Transverse colon (tissue), 4 donors: ENCODE measurements at regions of chrX and their contacts with region 1.

Region 1: GRCh38 chrX:69203591-69203990 is 38.3 kb upstream of the PJA1 start:
- DNase-seq: no peak
- H3K4me3 ChIP-seq: no peak overlapping the region
- H3K27ac ChIP-seq: no peak overlapping the region
- H3K4me1 ChIP-seq: no peaks in the 10 kb centered on the region
- H3K27me3 ChIP-seq: no peaks in the 10 kb centered on the region
- CTCF ChIP-seq: no peak
- EP300 ChIP-seq: no peak
- POLR2A ChIP-seq: no peak

Region 2: DNA sequence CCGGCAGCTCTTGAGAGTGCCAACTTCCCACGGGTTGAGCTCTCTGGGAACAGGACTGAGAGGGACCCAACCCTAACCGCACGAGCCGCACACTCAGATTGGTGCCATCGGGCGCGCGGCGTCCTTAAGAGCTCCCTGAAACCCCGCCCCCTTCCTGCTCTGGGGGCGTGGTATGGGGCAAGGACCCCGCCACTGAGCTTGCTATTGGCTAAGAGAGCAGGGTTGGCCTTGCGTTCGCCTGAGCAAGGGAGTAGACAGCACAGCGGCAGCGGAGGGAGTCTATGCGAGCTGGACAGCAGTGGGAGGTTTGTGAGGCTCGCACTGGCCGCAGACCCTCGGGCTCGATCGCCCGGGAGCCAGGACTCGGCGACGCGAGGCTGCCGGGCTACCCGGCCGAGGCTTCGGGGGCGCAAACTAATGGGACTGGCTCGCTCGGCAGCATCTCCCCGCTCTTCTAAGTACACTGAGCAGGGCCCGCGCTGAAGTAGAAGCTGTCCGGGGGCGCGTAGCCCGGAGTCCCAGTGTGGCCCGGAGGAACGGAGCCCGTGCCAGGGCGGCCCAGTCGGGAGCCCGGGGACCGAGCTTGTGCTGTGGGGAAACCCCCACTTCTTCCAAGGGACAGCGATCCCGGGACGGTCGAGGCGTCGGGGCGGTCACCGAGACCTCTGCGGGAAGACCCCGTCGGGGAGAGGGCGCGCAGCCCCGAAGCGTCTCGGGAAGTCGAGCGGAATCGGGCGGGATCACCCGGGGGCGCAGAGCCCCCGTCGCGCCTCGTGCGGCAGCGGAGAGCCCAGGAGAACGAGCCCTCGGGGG is 374.6 kb before region 1 on chrX and contains the start of gene EFNB1:
- in situ Hi-C with region 1: no loop called
- intact Hi-C with region 1: no loop called
- DNase-seq: peak; percentile 93
- H3K4me3 ChIP-seq: peak within 1 kb of the TSS; percentile 58 to 90 (median 72)
- H3K27ac ChIP-seq: peak within 1 kb of the TSS; percentile 84 to 94 (median 87)
- H3K4me1 ChIP-seq: peaks cover 0 to 22% (median 11%) of the 10 kb centered on the region in 4 donors
- H3K27me3 ChIP-seq: no peaks in the 10 kb centered on the region
- CTCF ChIP-seq: no peak
- EP300 ChIP-seq: no peak
- POLR2A ChIP-seq: peak; percentile 98
- total RNA-seq, gene EFNB1: 54.1 to 85.3 (median 69.0) TPM

Region 3: DNA sequence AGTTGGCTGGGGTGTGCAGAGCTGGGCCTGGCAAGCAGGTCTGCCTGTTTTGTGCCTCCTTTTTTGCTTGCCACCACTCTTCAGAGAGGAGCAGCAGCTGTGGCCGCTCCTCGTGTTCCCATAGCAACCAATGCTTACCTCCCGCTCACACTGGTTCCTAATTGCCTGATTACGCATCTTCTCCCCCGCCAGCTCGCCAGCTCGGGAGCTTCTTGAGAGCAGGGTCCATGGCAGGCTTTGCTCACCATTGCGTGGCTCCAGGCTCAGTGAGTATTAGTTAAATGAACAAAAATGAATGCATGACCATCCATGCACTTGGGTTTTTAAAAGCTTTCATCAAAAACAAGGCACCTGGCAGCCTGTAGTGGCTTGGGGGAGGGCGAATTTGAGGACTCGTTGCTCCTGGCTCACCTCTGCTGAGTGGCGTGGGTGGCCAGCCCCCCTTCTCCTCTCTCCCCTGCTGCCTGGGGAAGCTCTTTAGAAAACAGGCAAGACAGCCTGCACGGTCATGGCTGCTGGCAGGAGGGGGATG is 24.1 kb before region 1 on chrX:
- in situ Hi-C with region 1: no loop called
- intact Hi-C with region 1: loop called (anchors 1 kb)
- DNase-seq: no peak
- H3K4me3 ChIP-seq: no peak overlapping the region
- H3K27ac ChIP-seq: no peak overlapping the region
- H3K4me1 ChIP-seq: no peaks in the 10 kb centered on the region
- H3K27me3 ChIP-seq: no peaks in the 10 kb centered on the region
- CTCF ChIP-seq: no peak
- EP300 ChIP-seq: no peak
- POLR2A ChIP-seq: no peak

Region 4: DNA sequence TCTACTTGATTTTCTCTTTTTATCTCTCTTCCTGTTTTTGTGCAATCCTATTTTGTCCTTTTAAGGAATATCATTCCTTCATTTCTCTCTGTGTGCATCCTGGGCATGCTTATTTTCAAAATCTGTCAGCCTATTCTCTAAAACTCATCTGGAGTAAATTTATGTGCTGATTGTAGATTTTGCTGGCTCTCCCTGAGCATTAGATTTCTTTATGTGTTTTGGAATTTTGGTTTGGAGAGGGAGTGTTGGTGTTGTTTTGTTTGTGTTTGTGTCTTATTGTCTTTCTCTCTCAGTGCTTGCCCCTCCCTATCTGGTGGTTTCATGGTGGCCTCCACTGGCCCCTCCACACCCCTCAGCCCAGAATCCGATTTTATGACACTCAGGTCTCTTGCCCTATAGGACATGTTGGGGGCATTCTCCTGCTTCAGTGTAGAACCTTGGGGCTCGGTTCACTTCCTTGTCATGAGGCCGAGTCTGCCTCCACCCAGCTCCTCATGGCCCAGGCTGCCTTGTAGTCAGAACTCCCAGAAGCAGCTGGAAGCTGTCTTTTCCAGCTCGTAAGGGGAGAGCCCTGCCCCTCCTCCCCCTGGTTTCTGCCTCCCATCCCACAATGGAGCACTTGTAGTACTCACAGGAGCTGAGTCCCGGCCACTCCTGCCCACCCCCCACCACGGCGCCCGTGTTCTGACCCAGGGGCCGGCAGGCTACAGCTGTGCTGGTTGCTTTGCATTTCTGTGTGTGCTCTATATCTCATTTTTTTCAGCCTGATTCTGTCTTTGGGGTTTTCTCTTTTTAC is 13.8 kb before region 1 on chrX:
- in situ Hi-C with region 1: no loop called
- intact Hi-C with region 1: no loop called
- DNase-seq: no peak
- H3K4me3 ChIP-seq: no peak overlapping the region
- H3K27ac ChIP-seq: no peak overlapping the region
- H3K4me1 ChIP-seq: no peaks in the 10 kb centered on the region
- H3K27me3 ChIP-seq: no peaks in the 10 kb centered on the region
- CTCF ChIP-seq: no peak
- EP300 ChIP-seq: no peak
- POLR2A ChIP-seq: no peak

Region 5: DNA sequence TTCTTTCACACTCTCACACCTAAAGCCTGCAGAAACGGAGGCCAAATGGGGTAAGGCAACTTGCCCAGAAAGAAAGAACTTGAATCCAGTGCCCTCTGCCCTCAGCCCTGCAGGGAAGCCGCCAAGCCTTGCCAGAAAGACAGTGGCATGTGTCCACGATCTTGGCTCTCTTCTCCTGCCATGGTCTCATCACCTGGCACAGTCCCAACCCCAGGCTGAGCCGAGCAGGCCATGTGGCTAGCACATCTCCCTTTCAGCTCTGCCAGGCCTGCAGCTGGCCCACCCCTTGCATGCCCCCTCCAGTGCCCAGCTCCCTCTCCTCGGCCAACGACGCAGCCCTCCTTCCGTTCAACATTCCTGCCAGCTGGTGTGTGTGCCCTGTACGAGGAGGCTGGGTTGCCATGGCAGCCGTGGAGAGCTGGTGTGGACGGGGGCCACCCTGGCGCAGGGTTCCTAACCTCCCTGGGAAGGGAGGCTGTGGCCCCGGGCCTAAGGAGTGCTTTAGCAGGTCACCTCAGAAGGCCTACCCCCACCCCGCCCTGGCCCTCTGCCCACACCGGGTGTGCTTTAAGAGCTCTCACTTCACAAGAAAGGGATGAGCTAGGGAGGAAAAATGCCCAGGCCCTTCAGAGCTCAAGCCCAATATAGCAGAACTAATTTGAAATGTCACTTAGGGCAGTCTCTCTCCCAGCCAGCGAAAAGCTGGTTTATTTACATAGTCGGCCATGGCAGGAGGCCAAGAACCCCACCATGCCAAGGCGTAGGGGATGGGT is 34.7 kb after region 1 on chrX:
- in situ Hi-C with region 1: no loop called
- intact Hi-C with region 1: no loop called
- DNase-seq: no peak
- H3K4me3 ChIP-seq: no peak overlapping the region
- H3K27ac ChIP-seq: peak overlapping the region in 3 of 4 donors; percentile 24 to 34 (median 29)
- H3K4me1 ChIP-seq: no peaks in the 10 kb centered on the region
- H3K27me3 ChIP-seq: no peaks in the 10 kb centered on the region
- CTCF ChIP-seq: no peak
- EP300 ChIP-seq: no peak
- POLR2A ChIP-seq: no peak